ENCODE measurements at regions of chr1 and their contacts with region 1.

Region 1: GRCh38 chr1:197838836-197839235 is 63.6 kb upstream of the DENND1B start:
- DNase-seq: no peak
- ATAC-seq: peak; percentile 56
- H3K4me3 Mint-ChIP-seq: no peak overlapping the region
- H3K27ac Mint-ChIP-seq: peak overlapping the region; percentile 2
- H3K4me1 Mint-ChIP-seq: peaks cover 7% of the 10 kb centered on the region
- H3K27me3 Mint-ChIP-seq: no peaks in the 10 kb centered on the region
- CTCF ChIP-seq: no peak

Region 2: GRCh38 chr1:197787623-197788536 is 51.0 kb before region 1 on chr1:
- CTCF ChIA-PET with region 1: no interaction called
- POLR2A ChIA-PET with region 1: interaction called, 10 read pairs
- intact Hi-C with region 1: no loop called
- DNase-seq: no peak
- ATAC-seq: no peak
- H3K4me3 Mint-ChIP-seq: no peak overlapping the region
- H3K27ac Mint-ChIP-seq: no peak overlapping the region
- H3K4me1 Mint-ChIP-seq: peaks cover 3% of the 10 kb centered on the region
- H3K27me3 Mint-ChIP-seq: no peaks in the 10 kb centered on the region
- CTCF ChIP-seq: no peak